Gastrocnemius medialis (tissue), 4 donors: ENCODE measurements at regions of chr19 and their contacts with region 1.

Region 1: DNA sequence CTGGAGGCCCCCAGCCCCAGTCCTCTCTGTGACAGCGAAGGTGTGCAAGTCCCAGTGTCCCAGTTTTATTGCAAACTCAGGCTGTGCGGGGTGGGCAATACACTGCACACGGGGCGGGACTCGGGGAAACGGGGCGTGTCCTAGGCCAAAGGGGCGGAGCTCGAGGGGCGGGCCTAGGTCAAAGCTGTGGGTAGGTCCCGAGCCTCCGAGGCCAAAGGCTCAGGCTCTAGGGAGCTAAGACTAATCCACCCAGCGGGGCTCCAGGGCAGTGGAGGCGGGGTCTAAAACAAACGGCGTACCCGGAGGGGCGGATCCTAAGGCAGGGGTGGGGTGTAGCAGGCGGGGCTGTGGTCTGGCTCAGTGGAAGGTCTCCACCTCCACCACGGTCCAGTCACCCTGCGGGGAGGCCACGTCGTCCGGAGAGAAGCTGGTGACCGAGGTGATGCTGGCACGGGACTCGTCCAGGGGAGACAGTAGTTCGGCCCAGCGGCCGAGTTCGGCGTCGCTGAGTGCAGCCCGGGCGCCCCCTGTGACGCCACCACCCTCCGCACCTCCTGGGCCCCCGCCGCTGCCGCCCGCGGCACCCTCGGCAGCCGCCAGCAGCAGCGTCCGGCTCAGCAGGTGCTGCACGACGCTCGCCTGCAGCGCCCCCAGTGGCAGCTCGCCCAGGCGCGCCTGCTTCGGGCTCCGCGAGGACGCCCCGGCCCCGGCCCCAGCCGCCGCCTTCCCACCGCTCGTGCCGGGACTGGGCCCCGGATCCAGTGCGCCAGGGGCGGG is 5.3 kb downstream of the PRR36 start:
- DNase-seq: peak in 1 of 2 donors; percentile 35
- ATAC-seq: peak; percentile 59 to 75
- H3K4me3 ChIP-seq: peak overlapping the region; percentile 45 to 66 (median 50)
- H3K27ac ChIP-seq: no peak overlapping the region
- H3K4me1 ChIP-seq: peaks cover 7 to 8% of the 10 kb centered on the region in 2 donors
- H3K27me3 ChIP-seq: peaks cover 39 to 68% (median 61%) of the 10 kb centered on the region in 3 donors
- CTCF ChIP-seq: peak in 4 of 5 experiments; percentile 45 to 88 (median 78)
- POLR2A ChIP-seq: no peak

Region 2: DNA sequence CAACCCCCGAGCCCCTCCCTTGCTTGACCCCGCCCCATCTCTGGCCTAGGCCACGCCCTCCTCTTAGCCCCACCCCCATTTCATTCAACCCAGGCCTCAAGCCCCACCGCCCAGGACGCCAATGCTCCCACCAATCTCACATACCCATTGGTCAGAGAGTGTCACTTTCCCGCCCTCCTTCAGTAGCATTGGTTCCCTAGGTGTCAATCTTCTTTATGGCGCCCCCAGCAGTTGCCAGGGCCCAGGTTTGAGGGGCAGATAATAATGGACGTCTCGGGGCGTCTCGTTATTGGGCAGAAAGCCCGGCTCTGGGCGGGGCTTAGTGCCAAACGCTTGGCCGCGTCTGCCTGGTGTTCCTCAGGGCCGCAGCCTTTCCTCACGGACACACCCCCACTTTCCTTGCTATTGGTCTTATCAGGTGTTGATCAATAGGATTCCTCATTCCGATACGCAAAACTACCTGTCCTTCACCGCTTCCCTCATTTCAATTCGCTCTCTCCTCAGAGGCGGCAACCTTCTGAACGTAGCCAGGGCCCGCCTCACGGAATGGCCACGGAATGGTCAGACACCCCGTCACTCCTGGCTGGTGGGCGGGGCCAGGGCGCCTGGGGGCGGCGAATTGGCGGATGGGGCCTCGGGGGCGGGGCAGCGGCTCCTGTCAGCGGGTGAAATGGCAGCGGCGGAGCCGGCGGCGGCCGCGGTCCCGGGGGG is 39.1 kb before region 1 on chr19 and contains the start of gene EVI5L:
- in situ Hi-C with region 1: no loop called
- intact Hi-C with region 1: loop called (anchors 1 kb)
- DNase-seq: peak; percentile 98 to 99
- ATAC-seq: peak; percentile 96 to 98
- H3K4me3 ChIP-seq: peak within 1 kb of the TSS; percentile 70 to 83 (median 74)
- H3K27ac ChIP-seq: peak within 1 kb of the TSS; percentile 51 to 73 (median 61)
- H3K4me1 ChIP-seq: peaks cover 14 to 16% of the 10 kb centered on the region in 2 donors
- H3K27me3 ChIP-seq: peaks cover 0 to 9% (median 4%) of the 10 kb centered on the region in 3 donors
- CTCF ChIP-seq: no peak
- POLR2A ChIP-seq: no peak
- total RNA-seq, gene EVI5L: 17.5 to 24.6 (median 20.4) TPM

Region 3: GRCh38 chr19:7903244-7904073 is 34.6 kb after region 1 on chr19 and contains the start of gene MAP2K7:
- in situ Hi-C with region 1: no loop called
- intact Hi-C with region 1: no loop called
- DNase-seq: peak; percentile 99 to 100
- ATAC-seq: peak; percentile 95 to 97
- H3K4me3 ChIP-seq: peak within 1 kb of the TSS; percentile 82 to 97 (median 90)
- H3K27ac ChIP-seq: peak within 1 kb of the TSS; percentile 86 to 92 (median 90)
- H3K4me1 ChIP-seq: peaks cover 22 to 37% of the 10 kb centered on the region in 2 donors
- H3K27me3 ChIP-seq: no peaks in the 10 kb centered on the region
- CTCF ChIP-seq: peak in 4 of 5 experiments; percentile 22 to 55 (median 38)
- POLR2A ChIP-seq: peak; percentile 84 to 86
- total RNA-seq, gene MAP2K7: 17.7 to 41.7 (median 32.9) TPM

Region 4: DNA sequence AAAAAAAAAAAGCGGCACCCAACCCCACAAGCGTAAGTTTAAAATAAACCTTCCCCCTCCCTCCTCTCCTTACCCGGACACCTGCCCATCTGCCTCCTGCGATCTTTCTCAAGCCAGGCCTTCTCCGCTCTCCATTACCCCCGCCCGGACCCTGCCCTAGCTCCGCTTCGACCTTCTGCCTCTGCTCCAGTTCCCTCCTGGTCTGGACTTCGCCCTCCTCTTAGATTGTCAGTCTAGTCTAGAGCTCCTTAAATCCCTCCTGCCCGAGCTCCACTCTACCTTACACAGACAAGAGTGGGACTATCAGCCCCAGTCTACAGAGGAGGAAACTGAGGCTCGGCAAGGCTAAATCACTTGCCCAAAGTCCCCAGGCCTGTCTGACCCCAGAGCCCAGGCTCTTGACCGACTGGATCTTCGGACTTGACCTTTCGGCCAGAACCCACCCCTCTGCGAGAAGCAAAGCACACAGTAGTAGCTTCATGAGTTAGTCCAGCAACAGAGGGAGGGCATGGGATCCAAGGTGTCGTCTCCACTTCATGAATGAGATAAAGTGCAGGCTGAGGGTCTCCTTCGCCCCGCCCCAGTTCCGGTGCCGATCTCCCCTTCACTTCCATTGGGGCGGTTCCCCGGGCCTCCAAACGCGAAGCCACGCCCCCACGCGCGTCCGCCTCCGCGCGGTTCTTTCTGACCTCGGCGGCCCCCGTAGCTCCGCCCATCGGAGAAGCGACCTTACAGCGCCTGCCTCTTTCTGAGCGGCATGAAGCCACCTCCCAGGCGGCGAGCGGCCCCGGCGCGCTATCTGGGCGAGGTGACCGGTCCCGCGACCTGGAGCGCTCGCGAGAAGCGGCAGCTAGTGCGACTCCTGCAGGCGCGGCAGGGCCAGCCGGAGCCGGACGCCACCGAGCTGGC is 51.0 kb after region 1 on chr19 and contains the start of gene SNAPC2:
- in situ Hi-C with region 1: no loop called
- intact Hi-C with region 1: no loop called
- DNase-seq: peak; percentile 88 to 93
- ATAC-seq: peak; percentile 82 to 85
- H3K4me3 ChIP-seq: peak within 1 kb of the TSS; percentile 67 to 95 (median 80)
- H3K27ac ChIP-seq: peak within 1 kb of the TSS; percentile 80 to 95 (median 93)
- H3K4me1 ChIP-seq: peaks cover 21 to 38% of the 10 kb centered on the region in 2 donors
- H3K27me3 ChIP-seq: peaks cover 35 to 48% (median 41%) of the 10 kb centered on the region in 3 donors
- CTCF ChIP-seq: no peak
- POLR2A ChIP-seq: peak; percentile 44 to 53
- total RNA-seq, gene SNAPC2: 4.6 to 10.9 (median 7.1) TPM